B cell (primary cell): ENCODE measurements at regions of chr19 and their contacts with region 1.

Region 1: GRCh38 chr19:10388957-10389356 is 8.6 kb upstream of the TYK2 start:
- DNase-seq: peak; percentile 87
- ATAC-seq: peak; percentile 55
- H3K4me3 ChIP-seq: no peak overlapping the region
- H3K4me3 Mint-ChIP-seq: no peak overlapping the region
- H3K27ac ChIP-seq: no peak overlapping the region
- H3K27ac Mint-ChIP-seq: no peak overlapping the region
- H3K4me1 ChIP-seq: peaks cover 0 to 8% of the 10 kb centered on the region in 2 donors
- H3K4me1 Mint-ChIP-seq: peaks cover 10% of the 10 kb centered on the region
- H3K27me3 ChIP-seq: no peaks in the 10 kb centered on the region
- H3K27me3 Mint-ChIP-seq: no peaks in the 10 kb centered on the region
- CTCF ChIP-seq: peak; percentile 96

Region 2: DNA sequence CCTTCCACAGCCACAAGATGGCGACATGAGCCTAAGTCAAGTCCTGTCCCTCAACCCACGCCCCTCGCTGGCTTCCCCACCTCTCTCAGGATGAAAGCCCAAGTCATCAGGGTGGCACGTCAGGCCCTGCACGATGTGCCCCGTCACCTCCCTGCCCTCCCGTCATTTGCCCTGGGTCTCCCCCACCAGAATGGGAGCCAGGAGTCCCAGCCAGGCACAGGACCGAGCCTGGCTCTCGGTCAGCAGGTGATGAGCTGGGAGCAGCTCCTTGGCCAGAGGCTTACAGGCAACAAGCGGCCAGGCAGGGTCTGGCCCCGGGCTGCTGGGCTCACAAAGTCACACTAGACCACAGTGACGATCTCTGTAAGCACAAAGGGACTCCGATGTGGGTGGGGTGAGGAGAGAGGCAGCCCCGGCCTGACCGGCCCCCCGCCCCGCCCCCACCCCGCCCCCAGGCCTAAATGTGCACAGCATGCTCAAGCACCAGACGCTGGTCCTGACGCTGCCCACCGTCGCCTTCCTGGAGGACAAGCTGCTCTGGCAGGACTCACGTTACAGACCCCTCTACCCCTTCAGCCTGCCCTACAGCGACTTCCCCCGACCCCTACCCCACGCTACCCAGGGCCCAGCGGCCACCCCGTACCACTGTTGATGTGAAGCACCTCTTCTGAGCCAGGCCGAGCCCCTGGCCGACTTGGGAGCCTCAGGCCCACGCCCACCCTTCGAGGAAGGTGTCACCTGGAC is 129.6 kb before region 1 on chr19:
- CTCF ChIA-PET with region 1: interaction called, 570 read pairs
- POLR2A ChIA-PET with region 1: interaction called, 5 read pairs
- intact Hi-C with region 1: loop called (anchors 1 kb)
- DNase-seq: peak; percentile 90
- ATAC-seq: peak; percentile 89
- H3K4me3 ChIP-seq: no peak overlapping the region
- H3K4me3 Mint-ChIP-seq: no peak overlapping the region
- H3K27ac ChIP-seq: no peak overlapping the region
- H3K27ac Mint-ChIP-seq: no peak overlapping the region
- H3K4me1 ChIP-seq: peaks cover 0 to 3% of the 10 kb centered on the region in 2 donors
- H3K4me1 Mint-ChIP-seq: no peaks in the 10 kb centered on the region
- H3K27me3 ChIP-seq: no peaks in the 10 kb centered on the region
- H3K27me3 Mint-ChIP-seq: no peaks in the 10 kb centered on the region
- CTCF ChIP-seq: peak; percentile 80

Region 3: GRCh38 chr19:10292206-10292788 is 96.7 kb before region 1 on chr19:
- CTCF ChIA-PET with region 1: interaction called, 14 read pairs
- POLR2A ChIA-PET with region 1: no interaction called
- intact Hi-C with region 1: no loop called
- DNase-seq: no peak
- ATAC-seq: peak; percentile 28
- H3K4me3 ChIP-seq: peak overlapping the region in 4 of 5 experiments; percentile 13 to 63 (median 40)
- H3K4me3 Mint-ChIP-seq: peak overlapping the region; percentile 87
- H3K27ac ChIP-seq: no peak overlapping the region
- H3K27ac Mint-ChIP-seq: peak overlapping the region; percentile 26
- H3K4me1 ChIP-seq: peaks cover 86 to 89% of the 10 kb centered on the region in 2 donors
- H3K4me1 Mint-ChIP-seq: peaks cover 70% of the 10 kb centered on the region
- H3K27me3 ChIP-seq: peaks cover 0 to 90% (median 61%) of the 10 kb centered on the region in 4 experiments
- H3K27me3 Mint-ChIP-seq: peaks cover 45% of the 10 kb centered on the region
- CTCF ChIP-seq: no peak

Region 4: DNA sequence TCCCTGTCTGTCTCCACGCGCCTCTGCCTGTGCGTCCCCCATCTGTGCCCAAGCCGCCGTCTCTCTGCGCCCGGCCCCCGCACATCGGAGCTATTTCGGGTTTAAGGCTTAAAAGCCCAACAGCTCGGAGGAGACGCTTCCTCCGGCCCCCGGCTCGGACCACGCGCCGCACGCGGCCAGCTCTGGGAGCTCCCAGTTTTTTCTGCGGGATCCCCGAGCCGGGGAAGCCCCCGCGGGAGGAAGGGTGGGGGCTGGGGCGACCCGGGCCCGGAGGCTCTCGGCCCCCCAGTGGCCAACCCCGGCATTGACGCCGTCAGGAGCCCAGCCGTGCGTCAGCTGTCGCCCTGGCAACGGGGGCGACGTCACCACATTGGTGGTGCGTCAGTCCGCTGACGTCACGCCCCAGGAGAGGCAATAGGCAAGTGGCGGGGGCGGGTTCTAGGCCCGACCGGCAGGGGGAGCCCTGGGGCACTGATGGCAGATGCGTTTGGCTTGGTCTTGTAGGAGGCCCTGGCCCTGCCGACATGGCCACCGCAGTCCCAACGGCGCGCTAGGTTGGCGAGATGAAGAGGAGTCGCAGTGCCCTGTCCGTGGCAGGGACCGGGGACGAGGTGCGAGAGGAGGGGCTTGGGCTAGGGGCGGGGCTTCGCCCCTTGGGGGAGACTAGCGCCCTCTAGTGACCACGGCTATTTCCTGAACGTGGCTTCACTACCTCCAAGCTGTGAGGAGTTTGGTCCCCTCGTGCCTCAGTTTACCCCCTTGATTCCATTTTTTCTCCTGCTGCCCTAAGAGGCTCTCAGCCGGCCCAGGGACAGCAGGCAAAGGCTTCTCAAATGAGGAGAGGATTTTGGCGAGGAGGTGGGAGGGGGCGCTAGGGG is 27.7 kb after region 1 on chr19:
- CTCF ChIA-PET with region 1: interaction called, 14 read pairs
- POLR2A ChIA-PET with region 1: interaction called, 4 read pairs
- intact Hi-C with region 1: no loop called
- DNase-seq: peak; percentile 99
- ATAC-seq: peak; percentile 70
- H3K4me3 ChIP-seq: peak overlapping the region; percentile 15 to 69 (median 49)
- H3K4me3 Mint-ChIP-seq: peak overlapping the region; percentile 85
- H3K27ac ChIP-seq: peak overlapping the region in 1 of 2 donors; percentile 28
- H3K27ac Mint-ChIP-seq: peak overlapping the region; percentile 94
- H3K4me1 ChIP-seq: peaks cover 66 to 82% of the 10 kb centered on the region in 2 donors
- H3K4me1 Mint-ChIP-seq: peaks cover 59% of the 10 kb centered on the region
- H3K27me3 ChIP-seq: peaks cover 0 to 46% (median 28%) of the 10 kb centered on the region in 4 experiments
- H3K27me3 Mint-ChIP-seq: peaks cover 29% of the 10 kb centered on the region
- CTCF ChIP-seq: peak; percentile 100

Region 5: GRCh38 chr19:10769533-10770491 is 380.9 kb after region 1 on chr19:
- CTCF ChIA-PET with region 1: no interaction called
- POLR2A ChIA-PET with region 1: no interaction called
- intact Hi-C with region 1: no loop called
- DNase-seq: peak; percentile 43
- ATAC-seq: no peak
- H3K4me3 ChIP-seq: no peak overlapping the region
- H3K4me3 Mint-ChIP-seq: no peak overlapping the region
- H3K27ac ChIP-seq: peak overlapping the region in 1 of 2 donors; percentile 66
- H3K27ac Mint-ChIP-seq: peak overlapping the region; percentile 88
- H3K4me1 ChIP-seq: peaks cover 14 to 36% of the 10 kb centered on the region in 2 donors
- H3K4me1 Mint-ChIP-seq: peaks cover 46% of the 10 kb centered on the region
- H3K27me3 ChIP-seq: no peaks in the 10 kb centered on the region
- H3K27me3 Mint-ChIP-seq: no peaks in the 10 kb centered on the region
- CTCF ChIP-seq: peak; percentile 14